ENCODE measurements at regions of chr3 and their contacts with region 1.

Region 1: GRCh38 chr3:155805802-155806618 is at the start of gene C3orf33:
- DNase-seq: no peak
- H3K4me3 ChIP-seq: peak within 1 kb of the TSS; percentile 85
- H3K27me3 ChIP-seq: no peaks in the 10 kb centered on the region
- CTCF ChIP-seq: peak; percentile 57
- polyA plus RNA-seq, gene C3orf33: 2.0 and 2.3 TPM in 2 replicates

Region 2: GRCh38 chr3:155217591-155217990 is 588.4 kb before region 1 on chr3:
- CTCF ChIA-PET with region 1: no interaction called
- POLR2A ChIA-PET with region 1: no interaction called
- DNase-seq: no peak
- H3K4me3 ChIP-seq: no peak overlapping the region
- H3K27me3 ChIP-seq: no peaks in the 10 kb centered on the region
- CTCF ChIP-seq: no peak

Region 3: DNA sequence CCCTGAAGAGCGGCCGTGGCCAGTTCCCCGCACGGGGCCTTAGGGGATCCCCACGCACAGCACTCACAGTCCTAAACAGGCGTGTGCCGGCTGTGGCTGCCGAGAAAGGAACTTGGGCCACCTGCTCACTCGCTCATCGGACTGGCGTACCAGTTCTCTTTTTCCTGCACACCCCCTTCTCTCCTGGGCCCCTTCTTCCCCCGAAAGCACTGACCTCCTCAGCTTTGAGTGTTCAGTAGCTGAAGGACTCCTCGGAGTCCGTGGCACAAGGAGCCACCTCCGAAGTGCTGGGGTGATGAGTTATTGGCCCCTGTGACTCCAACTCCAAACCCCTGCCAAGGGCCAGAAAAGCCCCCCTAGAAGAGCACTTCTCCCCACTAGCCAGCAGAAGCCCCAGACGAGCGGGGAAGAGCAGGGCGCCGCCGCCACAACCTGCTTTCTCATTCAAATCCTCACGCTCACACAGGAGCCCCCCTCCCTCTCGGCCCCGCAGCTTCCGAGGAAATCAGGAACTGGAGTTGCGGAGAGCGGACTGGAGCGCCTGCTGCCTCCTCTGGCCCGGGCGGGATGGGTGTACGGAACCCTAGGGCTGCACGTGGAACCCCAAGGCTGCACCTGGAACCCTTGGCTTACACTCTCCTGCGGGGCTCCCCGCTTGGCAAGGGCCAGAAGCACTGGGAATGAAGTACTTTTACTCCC is 61.2 kb before region 1 on chr3 and contains the start of gene PLCH1:
- CTCF ChIA-PET with region 1: interaction called, 11 read pairs
- POLR2A ChIA-PET with region 1: no interaction called
- DNase-seq: no peak
- H3K4me3 ChIP-seq: peak within 1 kb of the TSS; percentile 59
- H3K27me3 ChIP-seq: peaks cover 5% of the 10 kb centered on the region
- CTCF ChIP-seq: no peak
- polyA plus RNA-seq, gene PLCH1: 0.06 and 0.07 TPM in 2 replicates

Region 4: DNA sequence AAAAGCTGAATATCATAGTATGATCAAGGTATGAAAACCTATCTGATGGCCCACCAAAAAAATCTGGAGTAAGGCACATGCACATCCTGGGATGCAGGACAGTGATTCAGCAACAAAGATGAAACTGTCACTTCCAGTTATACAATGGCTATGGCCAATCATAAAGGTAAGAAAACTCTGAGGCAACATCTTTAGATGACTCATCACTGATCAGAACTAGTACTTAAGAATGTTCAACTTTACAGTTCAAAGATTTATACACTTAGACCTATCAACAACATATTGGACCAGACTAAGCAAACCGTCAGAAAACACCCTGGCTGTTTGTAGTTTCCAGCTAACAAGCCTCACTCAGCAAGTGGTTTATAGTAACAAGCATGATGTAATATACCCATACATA is 39.8 kb before region 1 on chr3:
- CTCF ChIA-PET with region 1: interaction called, 10 read pairs
- POLR2A ChIA-PET with region 1: no interaction called
- DNase-seq: no peak
- H3K4me3 ChIP-seq: no peak overlapping the region
- H3K27me3 ChIP-seq: no peaks in the 10 kb centered on the region
- CTCF ChIP-seq: no peak

Region 5: DNA sequence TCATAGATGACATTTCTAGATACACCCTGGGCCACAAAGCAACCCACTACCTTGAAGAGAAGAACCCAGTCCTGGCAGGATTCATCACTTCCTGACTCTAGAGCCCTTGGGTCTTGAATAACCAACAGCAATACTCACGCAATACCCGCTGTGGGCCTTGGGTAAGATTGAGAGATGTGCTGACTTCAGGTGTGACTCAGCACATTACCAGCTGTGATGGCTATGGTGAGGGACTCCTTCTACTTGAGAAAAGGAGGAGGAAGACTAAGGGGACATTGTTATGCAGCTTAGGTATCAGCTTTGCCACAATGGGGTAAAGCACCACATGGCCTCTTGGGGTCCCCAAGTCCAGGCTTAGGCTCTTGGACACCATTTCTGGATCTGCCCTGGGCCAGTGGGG is 14.8 kb before region 1 on chr3:
- CTCF ChIA-PET with region 1: interaction called, 26 read pairs
- POLR2A ChIA-PET with region 1: no interaction called
- DNase-seq: no peak
- H3K4me3 ChIP-seq: no peak overlapping the region
- H3K27me3 ChIP-seq: no peaks in the 10 kb centered on the region
- CTCF ChIP-seq: no peak

Region 6: DNA sequence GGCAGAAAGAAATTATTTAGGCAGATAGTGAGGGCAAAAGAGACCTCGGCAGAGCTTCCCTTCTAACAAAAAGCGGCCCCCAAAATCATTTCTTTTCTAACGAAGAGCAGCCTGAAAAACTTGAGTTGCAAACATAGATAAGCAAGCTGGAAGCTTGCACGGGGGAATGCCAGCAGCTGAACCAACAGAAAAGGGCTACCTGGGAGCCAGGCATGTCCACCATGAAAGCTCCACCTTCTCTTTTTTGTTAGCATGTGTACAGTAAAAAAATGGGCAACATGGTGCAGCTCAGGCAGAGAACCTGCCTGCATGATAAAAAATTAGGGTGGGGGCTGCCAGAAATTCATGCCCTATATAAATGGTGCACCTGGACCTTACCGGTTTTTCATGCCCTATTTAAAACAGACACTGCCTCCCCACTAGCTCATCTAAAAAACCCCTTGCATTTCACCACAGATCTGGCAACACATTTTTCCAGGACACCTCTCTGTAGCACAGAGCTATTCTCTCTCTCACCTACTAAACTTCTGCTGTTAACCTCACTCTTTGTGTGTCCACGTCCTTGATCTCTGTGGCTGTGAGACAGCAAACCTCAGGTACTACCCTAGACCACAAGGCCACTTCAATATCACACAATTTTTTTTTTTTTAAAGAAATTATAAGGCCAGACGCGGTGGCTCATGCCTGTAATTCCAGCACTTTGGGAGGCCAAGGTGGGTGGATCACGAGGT is 29.5 kb after region 1 on chr3:
- CTCF ChIA-PET with region 1: interaction called, 12 read pairs
- POLR2A ChIA-PET with region 1: interaction called, 13 read pairs
- DNase-seq: no peak
- H3K4me3 ChIP-seq: no peak overlapping the region
- H3K27me3 ChIP-seq: no peaks in the 10 kb centered on the region
- CTCF ChIP-seq: no peak

Region 7: DNA sequence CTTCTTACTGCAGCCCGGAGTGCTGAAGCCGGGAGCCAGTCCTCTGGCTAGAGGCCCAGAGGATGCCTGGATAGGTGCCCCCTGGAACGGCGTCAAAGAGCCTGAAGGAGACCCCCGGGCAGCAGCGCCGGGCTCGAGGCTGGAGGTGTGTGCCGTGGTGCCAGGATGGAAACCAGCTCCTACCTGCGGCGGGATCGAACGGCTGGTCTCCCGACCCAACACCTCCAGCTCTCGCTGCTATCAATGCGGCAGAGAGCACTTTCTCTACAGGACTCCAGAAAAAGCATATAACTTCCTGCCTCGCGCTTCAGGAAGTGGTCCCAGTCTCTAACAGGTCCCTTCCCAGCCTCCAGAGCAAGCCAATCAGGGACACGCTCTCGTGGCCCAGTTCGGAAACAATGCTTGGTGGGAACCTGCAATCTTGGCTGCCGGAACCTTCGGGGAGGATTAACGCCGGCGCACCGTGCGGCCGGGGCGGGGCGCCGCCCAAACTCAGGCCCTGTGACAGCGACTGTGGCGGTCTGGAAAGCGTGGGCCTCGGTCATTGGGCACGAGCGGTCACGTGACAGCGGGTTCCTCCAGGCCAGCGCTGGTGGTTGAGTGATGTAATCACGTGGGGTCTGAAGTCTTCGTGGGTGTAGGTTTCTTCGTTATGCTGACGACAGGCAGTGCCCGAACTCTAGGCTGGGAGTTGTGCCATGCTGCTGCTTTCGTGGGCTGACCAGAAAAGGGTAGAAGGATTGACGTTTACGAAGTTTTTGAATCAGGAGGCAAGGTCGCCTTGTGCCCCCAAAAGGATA is 48.3 kb after region 1 on chr3 and contains the start of gene SLC33A1:
- CTCF ChIA-PET with region 1: interaction called, 21 read pairs
- POLR2A ChIA-PET with region 1: no interaction called
- DNase-seq: peak; percentile 97
- H3K4me3 ChIP-seq: peak within 1 kb of the TSS; percentile 86
- H3K27me3 ChIP-seq: no peaks in the 10 kb centered on the region
- CTCF ChIP-seq: no peak
- polyA plus RNA-seq, gene SLC33A1: 20.6 and 26.5 TPM in 2 replicates

Measured in BJ (cell line).